IMR-90 (cell line): ENCODE measurements at regions of chr11 and their contacts with region 1.

Region 1: DNA sequence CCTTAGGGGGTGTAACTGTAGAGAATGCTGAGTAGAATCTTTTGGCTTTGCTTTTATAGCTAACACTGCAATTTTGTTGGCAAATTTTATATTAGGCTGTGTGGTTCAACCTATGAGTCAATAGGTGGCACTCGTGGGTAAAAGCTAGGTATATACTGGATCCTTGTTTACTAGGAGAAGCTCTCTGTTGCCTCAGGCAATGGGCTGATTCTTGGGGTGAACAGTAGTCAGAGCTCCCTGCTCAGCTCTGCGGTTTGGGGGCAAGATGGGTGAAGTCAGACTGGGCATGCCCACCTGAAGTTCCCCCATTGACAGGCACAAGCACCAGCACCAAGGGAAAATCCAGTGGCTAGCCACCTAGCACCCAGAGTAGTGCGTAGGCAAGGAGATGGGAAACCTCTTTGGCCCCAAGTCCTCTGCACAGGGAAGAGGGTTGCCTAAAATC is 238.7 kb downstream of the FAM181B start:
- DNase-seq: no peak
- ATAC-seq: no peak
- H3K4me3 ChIP-seq: no peak overlapping the region
- H3K27ac ChIP-seq: no peak overlapping the region
- H3K4me1 ChIP-seq: no peaks in the 10 kb centered on the region
- H3K27me3 ChIP-seq: no peaks in the 10 kb centered on the region
- CTCF ChIP-seq: 0 out of 2 replicates have a peak, but pooled peaks have one; percentile 8
- POLR2A ChIP-seq: no peak
- RAD21 ChIP-seq: no peak

Region 2: GRCh38 chr11:82474885-82475284 is 20.1 kb before region 1 on chr11:
- CTCF ChIA-PET with region 1: no interaction called
- POLR2A ChIA-PET with region 1: no interaction called
- dilution Hi-C with region 1: no loop called
- in situ Hi-C with region 1: no loop called
- intact Hi-C with region 1: loop called (anchors 1 kb)
- DNase-seq: no peak
- ATAC-seq: no peak
- H3K4me3 ChIP-seq: no peak overlapping the region
- H3K27ac ChIP-seq: no peak overlapping the region
- H3K4me1 ChIP-seq: no peaks in the 10 kb centered on the region
- H3K27me3 ChIP-seq: no peaks in the 10 kb centered on the region
- CTCF ChIP-seq: no peak
- POLR2A ChIP-seq: no peak
- RAD21 ChIP-seq: no peak

Region 3: GRCh38 chr11:82507288-82507687 is 12.3 kb after region 1 on chr11:
- CTCF ChIA-PET with region 1: no interaction called
- POLR2A ChIA-PET with region 1: no interaction called
- dilution Hi-C with region 1: no loop called
- in situ Hi-C with region 1: no loop called
- intact Hi-C with region 1: no loop called
- DNase-seq: no peak
- ATAC-seq: no peak
- H3K4me3 ChIP-seq: no peak overlapping the region
- H3K27ac ChIP-seq: no peak overlapping the region
- H3K4me1 ChIP-seq: no peaks in the 10 kb centered on the region
- H3K27me3 ChIP-seq: no peaks in the 10 kb centered on the region
- CTCF ChIP-seq: no peak
- POLR2A ChIP-seq: no peak
- RAD21 ChIP-seq: no peak

Region 4: DNA sequence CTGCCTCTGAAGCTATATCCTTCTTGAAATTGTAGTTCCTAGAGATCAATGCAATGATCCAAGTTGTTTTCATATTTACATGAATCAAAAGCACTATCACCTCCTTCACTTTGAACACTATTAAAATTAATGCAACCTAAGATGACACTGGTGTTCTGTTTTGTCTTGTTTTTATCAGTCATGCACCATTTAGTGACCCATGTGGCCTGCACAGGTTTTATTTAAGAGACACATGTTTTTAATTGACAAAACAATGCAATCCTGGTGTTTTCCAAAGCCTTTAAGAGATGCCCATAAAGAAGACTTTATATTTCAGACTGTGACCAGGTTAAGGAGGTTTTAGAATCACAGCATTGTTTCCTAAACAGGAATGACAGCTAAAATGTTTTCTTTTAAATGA is 61.2 kb after region 1 on chr11:
- CTCF ChIA-PET with region 1: no interaction called
- POLR2A ChIA-PET with region 1: no interaction called
- dilution Hi-C with region 1: no loop called
- in situ Hi-C with region 1: no loop called
- intact Hi-C with region 1: no loop called
- DNase-seq: no peak
- ATAC-seq: no peak
- H3K4me3 ChIP-seq: no peak overlapping the region
- H3K27ac ChIP-seq: no peak overlapping the region
- H3K4me1 ChIP-seq: no peaks in the 10 kb centered on the region
- H3K27me3 ChIP-seq: no peaks in the 10 kb centered on the region
- CTCF ChIP-seq: no peak
- POLR2A ChIP-seq: no peak
- RAD21 ChIP-seq: no peak